Left ventricle myocardium inferior (tissue), 1 donor: ENCODE measurements at regions of chr5 and their contacts with region 1.

Region 1: GRCh38 chr5:149636851-149637246 is 55.6 kb downstream of the ARHGEF37 start:
- DNase-seq: no peak
- H3K4me3 ChIP-seq: no peak overlapping the region
- H3K27ac ChIP-seq: no peak overlapping the region
- H3K4me1 ChIP-seq: peaks cover 41% of the 10 kb centered on the region
- H3K27me3 ChIP-seq: no peaks in the 10 kb centered on the region
- CTCF ChIP-seq: peak; percentile 83

Region 2: DNA sequence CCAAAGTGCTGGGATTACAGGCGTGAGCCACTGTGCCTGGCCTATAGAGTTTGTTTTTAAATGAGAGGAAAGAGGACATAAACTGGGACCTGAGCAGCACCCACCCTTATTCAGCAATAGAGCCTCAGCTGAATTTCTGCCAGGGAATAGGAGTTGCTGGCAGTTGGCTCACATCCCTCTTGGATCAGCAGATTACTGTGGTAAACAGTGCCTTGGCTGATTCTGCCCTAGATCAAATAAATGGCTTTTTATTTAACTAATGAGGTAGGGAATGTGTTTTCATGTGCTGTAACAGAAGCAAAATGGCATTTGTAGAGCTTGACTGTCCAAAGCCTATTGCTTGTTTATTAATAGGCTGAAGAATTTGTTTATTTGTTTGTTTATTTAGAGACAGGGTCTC is 53.5 kb before region 1 on chr5:
- intact Hi-C with region 1: no loop called
- DNase-seq: no peak
- H3K4me3 ChIP-seq: peak overlapping the region; percentile 72
- H3K27ac ChIP-seq: peak overlapping the region; percentile 96
- H3K4me1 ChIP-seq: peaks cover 58% of the 10 kb centered on the region
- H3K27me3 ChIP-seq: no peaks in the 10 kb centered on the region
- CTCF ChIP-seq: no peak

Region 3: GRCh38 chr5:149828161-149828884 is 191.5 kb after region 1 on chr5:
- intact Hi-C with region 1: loop called (anchors 5 kb)
- DNase-seq: peak; percentile 87
- H3K4me3 ChIP-seq: no peak overlapping the region
- H3K27ac ChIP-seq: peak overlapping the region; percentile 88
- H3K4me1 ChIP-seq: peaks cover 76% of the 10 kb centered on the region
- H3K27me3 ChIP-seq: no peaks in the 10 kb centered on the region
- CTCF ChIP-seq: peak; percentile 88

Region 4: GRCh38 chr5:149990518-149991376 is 353.9 kb after region 1 on chr5:
- intact Hi-C with region 1: loop called (anchors 10 kb)
- DNase-seq: peak; percentile 57
- H3K4me3 ChIP-seq: no peak overlapping the region
- H3K27ac ChIP-seq: no peak overlapping the region
- H3K4me1 ChIP-seq: peaks cover 13% of the 10 kb centered on the region
- H3K27me3 ChIP-seq: no peaks in the 10 kb centered on the region
- CTCF ChIP-seq: peak; percentile 96